PC-9 (cell line): ENCODE measurements at regions of chr6 and their contacts with region 1.

Region 1: GRCh38 chr6:56938649-56939191 is 16.2 kb upstream of the BEND6 start:
- DNase-seq: peak; percentile 73 to 88
- H3K4me3 ChIP-seq: no peak overlapping the region
- H3K27ac ChIP-seq: peak overlapping the region; percentile 58
- H3K4me1 ChIP-seq: peaks cover 20% of the 10 kb centered on the region
- H3K27me3 ChIP-seq: no peaks in the 10 kb centered on the region
- CTCF ChIP-seq: no peak

Region 2: DNA sequence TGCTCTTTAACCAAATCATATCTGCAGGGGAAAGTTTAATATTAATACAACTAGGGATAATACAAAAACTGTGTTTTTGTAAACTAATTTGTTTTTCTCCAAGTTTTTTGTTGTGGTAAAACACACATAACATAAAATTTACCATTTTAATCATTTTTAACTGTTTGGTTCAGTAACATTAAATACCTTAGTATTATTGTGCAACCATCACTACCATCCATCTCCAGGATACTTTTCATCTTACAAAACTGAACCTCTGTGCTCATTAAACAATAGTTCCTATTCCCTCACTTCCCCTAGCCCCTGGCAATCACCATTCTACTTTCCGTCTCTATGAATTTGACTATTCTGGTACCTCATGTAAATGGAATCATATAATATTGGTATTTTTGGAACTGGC is 32.1 kb after region 1 on chr6:
- CTCF ChIA-PET with region 1: no interaction called
- POLR2A ChIA-PET with region 1: interaction called, 25 read pairs
- intact Hi-C with region 1: no loop called
- DNase-seq: no peak
- H3K4me3 ChIP-seq: no peak overlapping the region
- H3K27ac ChIP-seq: no peak overlapping the region
- H3K4me1 ChIP-seq: no peaks in the 10 kb centered on the region
- H3K27me3 ChIP-seq: no peaks in the 10 kb centered on the region
- CTCF ChIP-seq: no peak

Region 3: DNA sequence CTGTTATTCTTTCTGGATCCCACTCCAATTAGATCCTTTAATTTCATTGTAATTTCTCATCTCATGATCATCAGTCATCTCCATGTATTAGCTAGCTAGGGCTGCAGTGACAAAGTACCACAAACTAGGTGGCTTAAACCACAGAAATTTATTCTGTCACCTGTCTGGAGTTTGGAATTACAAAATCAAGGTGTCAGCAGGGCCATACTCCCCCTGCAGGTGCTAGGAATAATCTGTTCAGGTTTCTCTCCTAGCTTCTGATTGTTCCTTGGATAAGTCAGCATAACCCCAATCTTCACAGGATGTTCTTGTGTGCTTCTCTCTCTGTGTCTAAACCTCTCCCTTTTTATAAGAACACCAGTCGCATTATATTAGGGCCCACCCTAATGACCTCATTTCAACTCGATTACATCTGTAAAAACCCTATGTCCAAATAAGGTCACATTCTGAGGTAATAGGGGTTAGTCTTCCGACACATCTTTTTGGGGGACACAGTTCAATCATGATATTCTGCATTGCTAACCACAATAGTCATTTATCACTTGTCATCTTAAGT is 56.7 kb after region 1 on chr6:
- CTCF ChIA-PET with region 1: no interaction called
- POLR2A ChIA-PET with region 1: no interaction called
- intact Hi-C with region 1: no loop called
- DNase-seq: no peak
- H3K4me3 ChIP-seq: no peak overlapping the region
- H3K27ac ChIP-seq: no peak overlapping the region
- H3K4me1 ChIP-seq: no peaks in the 10 kb centered on the region
- H3K27me3 ChIP-seq: no peaks in the 10 kb centered on the region
- CTCF ChIP-seq: peak; percentile 53

Region 4: GRCh38 chr6:57089687-57090460 is 151.2 kb after region 1 on chr6 and contains the start of gene ZNF451:
- CTCF ChIA-PET with region 1: interaction called, 17 read pairs
- POLR2A ChIA-PET with region 1: no interaction called
- intact Hi-C with region 1: no loop called
- DNase-seq: peak; percentile 89 to 97
- H3K4me3 ChIP-seq: peak within 1 kb of the TSS; percentile 52; the same call in 1 of the 2 replicates
- H3K27ac ChIP-seq: no peak within 1 kb of the TSS
- H3K4me1 ChIP-seq: peaks cover 17% of the 10 kb centered on the region
- H3K27me3 ChIP-seq: no peaks in the 10 kb centered on the region
- CTCF ChIP-seq: no peak
- total RNA-seq, gene ZNF451: 31.7 and 50.6 TPM in 2 replicates